ENCODE measurements at regions of chr11 and their contacts with region 1.

Region 1: GRCh38 chr11:12888525-12889158 is 120.5 kb upstream of the RASSF10 start:
- DNase-seq: peak; percentile 53 to 94
- H3K4me3 ChIP-seq: peak overlapping the region in 1 of 2 donors; percentile 7
- H3K27ac ChIP-seq: peak overlapping the region; percentile 81 to 82
- H3K4me1 ChIP-seq: peaks cover 8 to 25% of the 10 kb centered on the region in 2 donors
- H3K27me3 ChIP-seq: no peaks in the 10 kb centered on the region
- CTCF ChIP-seq: peak; percentile 69 to 78 (median 75)

Region 2: DNA sequence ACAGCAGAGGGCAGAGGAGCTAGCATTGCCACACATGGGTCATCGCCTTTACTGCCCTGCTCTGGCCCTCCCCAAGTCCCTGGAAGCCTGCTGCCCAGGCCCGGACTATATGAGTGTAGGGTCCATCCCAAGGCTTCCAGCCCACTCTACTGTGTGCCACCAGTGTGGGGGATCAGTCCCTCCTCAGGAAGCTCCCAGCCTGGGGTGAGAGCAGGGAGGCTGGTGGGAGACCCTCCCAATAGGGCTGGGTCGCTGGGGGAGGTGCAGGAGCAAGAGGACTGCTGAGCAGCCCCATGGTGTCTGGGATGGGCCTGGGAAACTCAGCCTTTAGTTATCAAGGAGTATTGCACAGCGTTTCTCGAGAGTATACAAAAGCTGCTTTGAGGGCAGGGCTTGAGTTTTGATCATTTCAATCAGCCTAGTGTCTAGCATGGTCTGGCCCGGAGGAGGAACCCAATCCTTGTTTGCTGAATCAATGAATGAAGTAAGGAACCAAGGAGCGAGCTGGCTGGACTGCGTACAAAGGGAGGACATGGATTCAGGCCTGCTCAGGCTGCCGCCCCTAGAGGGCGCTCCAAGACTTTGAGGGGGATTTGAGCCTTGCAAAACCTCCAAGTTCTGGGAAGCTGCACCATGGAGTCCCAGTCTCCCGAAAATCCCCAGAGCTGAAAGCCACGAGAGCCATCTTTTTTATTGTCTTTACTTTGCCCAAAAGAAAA is 600.3 kb before region 1 on chr11:
- intact Hi-C with region 1: loop called (anchors 2 kb)
- DNase-seq: peak in 1 of 2 donors; percentile 90
- H3K4me3 ChIP-seq: no peak overlapping the region
- H3K27ac ChIP-seq: peak overlapping the region; percentile 92 to 93
- H3K4me1 ChIP-seq: peaks cover 11 to 38% of the 10 kb centered on the region in 2 donors
- H3K27me3 ChIP-seq: no peaks in the 10 kb centered on the region
- CTCF ChIP-seq: peak; percentile 68 to 79 (median 75)

Region 3: GRCh38 chr11:12599408-12600143 is 289.1 kb before region 1 on chr11:
- intact Hi-C with region 1: loop called (anchors 2 kb)
- DNase-seq: peak in 1 of 2 donors; percentile 65
- H3K4me3 ChIP-seq: no peak overlapping the region
- H3K27ac ChIP-seq: no peak overlapping the region
- H3K4me1 ChIP-seq: no peaks in the 10 kb centered on the region
- H3K27me3 ChIP-seq: no peaks in the 10 kb centered on the region
- CTCF ChIP-seq: peak; percentile 55 to 63 (median 56)

Region 4: DNA sequence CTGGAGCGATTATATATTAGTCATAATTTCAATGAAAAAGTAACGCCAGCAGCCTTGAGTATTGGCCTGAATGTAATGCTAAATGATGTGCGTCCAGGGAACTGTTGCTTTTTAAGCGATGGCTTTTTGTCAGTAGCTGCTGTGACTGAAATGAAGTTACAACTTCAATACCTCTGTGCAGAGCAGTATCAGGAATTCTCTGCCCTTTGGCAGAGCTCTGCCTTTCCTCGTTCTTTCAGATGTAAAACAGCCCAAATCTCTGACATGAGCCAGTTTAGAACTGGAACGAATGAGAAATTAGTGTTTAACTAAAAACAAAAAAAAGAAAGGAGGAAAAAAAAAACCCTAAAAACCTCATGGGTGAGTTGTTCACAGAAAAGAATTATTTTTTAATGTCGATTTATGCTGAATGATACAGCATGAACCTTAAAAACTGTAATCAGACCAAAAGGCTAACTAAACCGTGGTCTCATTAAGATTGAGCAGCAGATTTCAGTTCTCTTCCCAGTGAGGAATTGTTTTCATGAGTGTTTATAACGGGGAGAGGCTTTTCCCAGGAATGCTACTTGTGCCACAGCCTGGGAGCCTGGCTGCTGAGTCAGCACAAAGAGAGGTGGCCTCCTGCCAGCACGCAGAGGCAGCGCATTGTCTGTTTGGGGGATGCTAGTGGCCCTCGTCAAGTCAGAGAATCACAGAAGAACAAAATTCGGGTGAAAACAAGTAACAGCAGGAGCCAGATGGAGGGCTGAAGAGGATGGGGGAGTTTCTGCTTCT is 25.8 kb before region 1 on chr11:
- intact Hi-C with region 1: no loop called
- DNase-seq: no peak
- H3K4me3 ChIP-seq: no peak overlapping the region
- H3K27ac ChIP-seq: no peak overlapping the region
- H3K4me1 ChIP-seq: peaks cover 0 to 8% of the 10 kb centered on the region in 2 donors
- H3K27me3 ChIP-seq: no peaks in the 10 kb centered on the region
- CTCF ChIP-seq: no peak

Measured in ascending aorta (tissue), 2 donors.